ENCODE measurements at regions of chr1 and their contacts with region 1.

Region 1: DNA sequence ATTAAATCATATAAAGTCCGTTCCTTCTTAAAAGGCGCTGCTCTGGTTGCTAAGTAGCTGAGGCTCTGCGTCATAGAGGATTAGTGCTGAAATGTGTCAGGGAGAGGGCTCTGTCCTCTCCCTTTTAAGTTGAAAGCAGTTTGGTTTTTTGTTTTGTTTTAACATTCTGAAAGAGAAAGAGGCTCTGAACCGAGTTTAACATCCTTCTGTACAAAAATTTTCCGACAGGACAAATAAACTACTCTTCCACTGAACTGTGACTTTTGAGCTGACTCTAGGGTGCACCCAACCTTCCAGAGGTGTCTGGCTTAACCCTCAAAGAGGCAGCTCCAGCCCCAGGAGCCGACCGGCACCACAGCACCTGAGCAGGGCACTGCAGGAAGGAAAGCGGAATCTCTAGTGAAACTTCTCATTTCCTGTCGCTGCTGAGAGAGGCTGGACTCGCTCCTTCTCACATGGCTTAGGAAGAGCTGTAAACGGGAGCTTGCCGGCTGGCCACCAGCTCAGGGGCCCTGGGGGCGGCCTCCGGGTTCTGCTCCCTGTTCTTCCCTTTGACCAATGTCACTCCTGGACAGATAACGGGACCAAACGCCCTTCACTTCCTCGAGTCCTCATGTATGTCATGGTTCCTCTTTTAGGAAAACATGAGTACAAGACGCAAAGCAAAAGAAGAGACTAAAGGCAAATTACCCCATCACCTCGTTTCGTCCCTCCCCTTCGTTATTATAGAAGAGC is 1.2 kb downstream of the VAV3 start:
- DNase-seq: no peak
- ATAC-seq: peak in 1 of 2 donors; percentile 17
- H3K4me3 ChIP-seq: peak overlapping the region; percentile 51 to 54 (median 52)
- H3K27ac ChIP-seq: peak overlapping the region in 3 of 4 donors; percentile 16 to 46 (median 32)
- H3K4me1 ChIP-seq: peaks cover 0 to 10% of the 10 kb centered on the region in 2 donors
- H3K27me3 ChIP-seq: peaks cover 14 to 22% (median 14%) of the 10 kb centered on the region in 3 donors
- CTCF ChIP-seq: no peak
- POLR2A ChIP-seq: no peak

Region 2: DNA sequence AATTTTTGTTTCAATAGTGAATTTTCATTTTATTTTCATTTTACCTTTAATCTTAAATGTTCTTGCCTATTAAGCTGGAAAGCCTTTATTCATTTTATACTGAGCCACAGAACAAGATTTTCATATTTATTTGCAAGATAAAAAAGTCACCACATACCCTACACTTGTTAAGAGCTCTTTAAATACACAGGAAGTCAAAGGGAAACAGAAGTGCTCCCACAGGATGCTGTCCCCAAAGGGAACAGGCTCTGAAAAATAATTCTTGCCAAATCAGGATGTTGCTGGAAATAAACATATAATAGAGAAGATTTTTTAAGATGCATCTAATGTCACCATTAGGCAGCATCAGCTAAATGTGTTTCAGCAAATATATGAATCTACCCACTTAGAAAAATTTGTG is 112.3 kb before region 1 on chr1:
- in situ Hi-C with region 1: no loop called
- intact Hi-C with region 1: no loop called
- DNase-seq: no peak
- ATAC-seq: no peak
- H3K4me3 ChIP-seq: no peak overlapping the region
- H3K27ac ChIP-seq: no peak overlapping the region
- H3K4me1 ChIP-seq: peaks cover 0 to 5% of the 10 kb centered on the region in 2 donors
- H3K27me3 ChIP-seq: no peaks in the 10 kb centered on the region
- CTCF ChIP-seq: no peak
- POLR2A ChIP-seq: no peak

Region 3: DNA sequence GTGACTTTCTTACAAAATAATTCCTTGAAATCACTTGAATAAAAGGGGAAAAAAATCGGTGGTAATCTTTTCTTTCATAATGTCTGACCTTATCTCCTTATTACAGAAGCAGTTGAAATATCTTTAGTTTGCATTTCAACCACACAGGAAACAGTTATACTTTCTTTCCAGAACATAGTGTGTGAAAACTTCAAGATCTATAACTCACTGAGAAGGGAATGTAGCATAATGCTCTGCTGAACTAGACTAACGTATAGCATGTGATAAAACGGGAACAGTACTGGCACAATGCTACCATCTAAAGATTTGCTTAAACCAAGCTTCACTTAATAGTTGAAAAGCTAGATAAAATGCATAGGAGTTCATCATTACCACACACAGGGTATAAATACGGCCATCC is 43.8 kb before region 1 on chr1:
- in situ Hi-C with region 1: no loop called
- intact Hi-C with region 1: no loop called
- DNase-seq: no peak
- ATAC-seq: no peak
- H3K4me3 ChIP-seq: no peak overlapping the region
- H3K27ac ChIP-seq: no peak overlapping the region
- H3K4me1 ChIP-seq: no peaks in the 10 kb centered on the region
- H3K27me3 ChIP-seq: no peaks in the 10 kb centered on the region
- CTCF ChIP-seq: no peak
- POLR2A ChIP-seq: no peak

Region 4: DNA sequence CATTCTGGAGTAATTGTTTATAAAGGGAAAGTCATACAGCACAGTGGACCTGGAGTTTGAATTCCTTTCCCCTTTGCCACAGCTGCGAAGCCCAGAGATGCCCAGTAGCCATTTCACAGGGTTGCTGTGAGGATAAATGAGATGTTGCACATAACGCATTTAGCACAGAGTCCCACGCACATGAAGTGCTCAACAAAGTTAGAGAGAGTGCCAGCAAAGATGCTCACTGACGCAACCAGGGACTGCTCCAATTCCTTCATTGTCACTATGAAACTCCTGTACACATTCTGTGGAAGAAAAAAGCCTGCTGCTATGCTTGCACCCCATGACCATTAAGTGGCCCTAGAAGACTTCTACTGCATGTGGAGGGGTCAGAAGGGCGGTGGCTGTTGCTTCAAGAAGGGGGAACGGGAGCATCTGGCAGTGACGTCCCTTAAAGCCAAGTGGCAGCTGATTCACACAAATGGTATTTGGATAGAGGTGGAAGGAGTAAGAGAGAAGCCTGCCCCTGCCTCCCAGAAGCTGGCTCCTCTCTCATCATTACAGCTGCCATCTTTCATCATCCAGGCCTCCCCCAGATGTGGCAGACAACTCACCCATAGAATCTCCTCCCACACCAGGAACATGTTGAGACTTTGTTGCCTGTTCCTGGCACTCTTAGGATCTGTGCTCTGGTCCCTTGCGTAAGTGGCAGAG is 27.8 kb after region 1 on chr1:
- in situ Hi-C with region 1: no loop called
- intact Hi-C with region 1: loop called (anchors 1 kb)
- DNase-seq: peak in 1 of 2 donors; percentile 19
- ATAC-seq: peak; percentile 49 to 68
- H3K4me3 ChIP-seq: no peak overlapping the region
- H3K27ac ChIP-seq: no peak overlapping the region
- H3K4me1 ChIP-seq: no peaks in the 10 kb centered on the region
- H3K27me3 ChIP-seq: no peaks in the 10 kb centered on the region
- CTCF ChIP-seq: no peak
- POLR2A ChIP-seq: no peak

Measured in gastrocnemius medialis (tissue), 4 donors.